Activated CD4-positive, alpha-beta memory T cell treated with anti-CD3 and anti-CD28 coated beads for 36 hours (primary cell): ENCODE measurements at regions of chr13 and their contacts with region 1.

Region 1: GRCh38 chr13:99258210-99258860 is at the start of gene GPR18:
- DNase-seq: peak; percentile 57
- H3K4me3 Mint-ChIP-seq: peak within 1 kb of the TSS; percentile 77
- H3K27ac Mint-ChIP-seq: peak within 1 kb of the TSS; percentile 90
- H3K4me1 Mint-ChIP-seq: peaks cover 76% of the 10 kb centered on the region
- H3K27me3 Mint-ChIP-seq: no peaks in the 10 kb centered on the region
- total RNA-seq, gene GPR18: 2.4 to 2.8 TPM

Region 2: DNA sequence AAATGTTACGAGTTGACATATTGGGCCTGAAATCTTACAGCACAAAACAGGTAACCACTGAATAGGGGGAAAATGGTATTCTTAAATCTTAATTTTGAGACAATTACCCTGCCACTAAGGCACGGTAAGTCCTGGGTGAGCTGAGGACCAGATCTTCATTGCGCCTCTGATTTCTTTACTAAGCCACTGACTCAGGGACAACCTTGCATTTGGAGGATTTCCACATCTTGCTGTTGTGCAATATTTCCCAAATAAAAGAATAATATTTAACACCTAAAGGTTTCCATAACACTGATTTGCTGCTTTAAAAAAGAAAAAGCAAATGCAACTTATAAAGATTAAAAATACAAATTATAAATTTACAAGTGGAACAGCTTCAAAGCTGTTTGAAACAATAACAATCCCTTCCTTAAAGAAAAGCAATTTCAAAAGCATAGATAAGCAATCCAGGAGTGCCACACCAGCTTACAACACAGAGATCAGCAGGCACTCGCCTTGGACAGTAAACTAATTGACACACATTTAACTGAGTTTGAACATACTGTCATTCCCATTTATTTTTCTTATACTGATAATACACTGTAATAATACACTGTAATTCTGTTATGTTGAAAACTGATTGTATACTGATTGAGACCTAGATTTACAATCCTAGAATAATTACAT is 200.9 kb before region 1 on chr13:
- CTCF ChIA-PET with region 1: no interaction called
- POLR2A ChIA-PET with region 1: no interaction called
- intact Hi-C with region 1: loop called (anchors 5 kb)
- DNase-seq: no peak
- H3K4me3 Mint-ChIP-seq: no peak overlapping the region
- H3K27ac Mint-ChIP-seq: no peak overlapping the region
- H3K4me1 Mint-ChIP-seq: peaks cover 56% of the 10 kb centered on the region
- H3K27me3 Mint-ChIP-seq: no peaks in the 10 kb centered on the region

Region 3: DNA sequence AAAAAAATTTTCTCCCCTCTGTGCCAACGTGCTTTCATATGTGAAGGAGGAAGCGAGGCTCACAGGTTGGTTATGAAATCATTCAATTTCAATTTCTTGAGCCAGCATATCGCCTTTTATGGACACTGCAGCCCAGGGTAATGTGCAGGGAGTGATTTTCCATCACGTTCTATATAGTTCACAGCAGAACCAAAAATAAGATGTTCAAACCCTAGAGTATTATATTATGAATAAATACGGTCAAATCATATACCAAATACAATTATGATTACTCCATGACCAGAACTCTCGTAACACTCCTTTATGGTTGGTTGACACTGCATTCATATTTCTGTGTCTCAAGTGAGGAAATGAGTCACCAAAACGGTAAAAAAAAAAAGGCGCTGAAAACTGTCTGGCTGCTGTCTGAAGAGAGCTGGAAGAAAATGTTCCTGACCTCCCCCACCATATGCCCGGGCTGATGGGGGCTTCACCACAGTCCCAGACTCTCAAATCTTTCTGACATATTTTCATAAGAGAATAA is 133.5 kb before region 1 on chr13:
- CTCF ChIA-PET with region 1: no interaction called
- POLR2A ChIA-PET with region 1: no interaction called
- intact Hi-C with region 1: loop called (anchors 1 kb)
- DNase-seq: peak; percentile 38
- H3K4me3 Mint-ChIP-seq: peak overlapping the region; percentile 58
- H3K27ac Mint-ChIP-seq: peak overlapping the region; percentile 71
- H3K4me1 Mint-ChIP-seq: peaks cover 45% of the 10 kb centered on the region
- H3K27me3 Mint-ChIP-seq: peaks cover 2% of the 10 kb centered on the region

Region 4: DNA sequence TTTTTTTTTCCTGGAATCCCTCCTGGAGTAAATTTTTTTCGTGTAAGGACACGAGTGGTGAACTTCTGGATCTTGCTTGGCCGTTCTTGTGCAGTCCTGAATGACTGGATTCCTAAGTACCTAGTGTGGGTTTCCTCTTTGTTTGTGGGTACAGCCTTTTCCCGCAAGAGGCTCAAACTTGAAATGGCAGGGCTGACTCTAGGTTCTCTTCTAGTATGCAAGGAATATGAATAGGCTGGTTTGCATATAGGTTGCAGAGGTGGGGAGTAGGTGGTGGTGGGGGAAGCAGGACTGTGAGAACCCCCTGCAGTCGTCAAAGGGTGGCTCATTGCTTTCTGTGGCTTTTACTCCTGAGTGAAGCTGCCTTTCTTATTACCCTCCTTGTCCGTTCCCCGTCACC is 44.1 kb before region 1 on chr13:
- CTCF ChIA-PET with region 1: interaction called, 3 read pairs
- POLR2A ChIA-PET with region 1: interaction called, 4 read pairs
- intact Hi-C with region 1: loop called (anchors 1 kb)
- DNase-seq: peak; percentile 84
- H3K4me3 Mint-ChIP-seq: peak overlapping the region; percentile 78
- H3K27ac Mint-ChIP-seq: peak overlapping the region; percentile 78
- H3K4me1 Mint-ChIP-seq: peaks cover 78% of the 10 kb centered on the region
- H3K27me3 Mint-ChIP-seq: no peaks in the 10 kb centered on the region

Region 5: GRCh38 chr13:99228737-99229691 is 29.3 kb before region 1 on chr13:
- CTCF ChIA-PET with region 1: interaction called, 5 read pairs
- POLR2A ChIA-PET with region 1: interaction called, 3 read pairs
- intact Hi-C with region 1: loop called (anchors 1 kb)
- DNase-seq: no peak
- H3K4me3 Mint-ChIP-seq: peak overlapping the region; percentile 64
- H3K27ac Mint-ChIP-seq: peak overlapping the region; percentile 68
- H3K4me1 Mint-ChIP-seq: peaks cover 71% of the 10 kb centered on the region
- H3K27me3 Mint-ChIP-seq: no peaks in the 10 kb centered on the region